ENCODE measurements at regions of chr4 and their contacts with region 1.

Region 1: GRCh38 chr4:144174401-144175067 is 34.0 kb upstream of the GYPA start:
- DNase-seq: peak; percentile 65

Region 2: DNA sequence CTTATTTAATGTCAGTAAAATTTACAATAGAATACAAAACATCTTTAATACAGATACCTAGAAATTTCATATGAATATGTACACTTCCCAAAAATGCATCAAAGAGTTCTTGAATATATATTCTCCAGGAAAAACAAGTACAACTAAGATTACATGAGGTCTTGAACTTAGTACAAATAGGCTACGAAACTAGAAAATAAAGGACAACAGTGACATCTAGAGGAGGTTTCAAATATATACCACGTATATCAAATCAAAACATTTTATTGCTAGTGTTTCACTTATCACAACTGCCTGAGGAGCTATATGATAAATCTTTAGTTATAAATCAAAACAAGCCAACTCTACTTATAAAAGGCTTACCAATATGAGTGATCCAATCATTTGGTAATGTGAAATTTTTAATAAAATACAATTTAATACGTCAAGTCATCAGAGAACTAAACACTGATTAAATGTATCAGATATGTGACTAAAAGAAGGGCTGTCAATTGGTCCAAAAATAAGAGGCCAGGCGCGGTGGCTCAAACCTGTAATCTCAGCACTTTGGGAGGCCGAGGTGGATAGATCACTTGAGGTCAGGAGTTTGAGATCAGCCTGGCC is 886.9 kb after region 1 on chr4:
- in situ Hi-C with region 1: loop called (anchors 25 kb)
- DNase-seq: peak; percentile 58

Measured in KBM-7 (cell line).